ENCODE measurements at regions of chr20 and their contacts with region 1.

Region 1: DNA sequence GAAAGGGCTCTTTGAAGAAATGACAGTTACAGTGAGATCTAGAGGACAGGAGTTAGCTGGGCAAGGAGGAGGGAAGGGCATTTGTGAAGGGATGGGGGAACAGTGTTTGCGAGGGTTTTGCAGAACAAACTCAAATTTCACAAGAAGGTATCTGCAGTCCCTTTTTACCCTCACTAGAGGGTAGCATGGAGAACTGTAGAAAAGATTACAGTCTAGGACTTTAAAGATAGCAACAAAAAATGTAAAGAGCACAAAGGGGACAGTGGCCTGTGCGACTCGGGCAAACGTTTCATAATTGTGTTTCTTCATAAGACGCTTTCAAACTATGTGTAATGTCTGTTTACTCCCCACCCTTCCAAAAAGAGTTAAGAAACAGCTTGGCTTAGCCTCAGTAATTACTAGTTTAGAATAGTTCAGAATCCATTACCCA is 21.2 kb upstream of the ASXL1 start:
- DNase-seq: peak in 1 of 2 donors; percentile 63
- H3K4me3 ChIP-seq: no peak overlapping the region
- H3K27ac ChIP-seq: no peak overlapping the region
- H3K4me1 ChIP-seq: peaks cover 16 to 54% (median 43%) of the 10 kb centered on the region in 4 donors
- H3K27me3 ChIP-seq: no peaks in the 10 kb centered on the region
- CTCF ChIP-seq: peak in 5 of 7 experiments; percentile 29 to 60 (median 45)
- EP300 ChIP-seq: no peak
- POLR2A ChIP-seq: no peak

Region 2: DNA sequence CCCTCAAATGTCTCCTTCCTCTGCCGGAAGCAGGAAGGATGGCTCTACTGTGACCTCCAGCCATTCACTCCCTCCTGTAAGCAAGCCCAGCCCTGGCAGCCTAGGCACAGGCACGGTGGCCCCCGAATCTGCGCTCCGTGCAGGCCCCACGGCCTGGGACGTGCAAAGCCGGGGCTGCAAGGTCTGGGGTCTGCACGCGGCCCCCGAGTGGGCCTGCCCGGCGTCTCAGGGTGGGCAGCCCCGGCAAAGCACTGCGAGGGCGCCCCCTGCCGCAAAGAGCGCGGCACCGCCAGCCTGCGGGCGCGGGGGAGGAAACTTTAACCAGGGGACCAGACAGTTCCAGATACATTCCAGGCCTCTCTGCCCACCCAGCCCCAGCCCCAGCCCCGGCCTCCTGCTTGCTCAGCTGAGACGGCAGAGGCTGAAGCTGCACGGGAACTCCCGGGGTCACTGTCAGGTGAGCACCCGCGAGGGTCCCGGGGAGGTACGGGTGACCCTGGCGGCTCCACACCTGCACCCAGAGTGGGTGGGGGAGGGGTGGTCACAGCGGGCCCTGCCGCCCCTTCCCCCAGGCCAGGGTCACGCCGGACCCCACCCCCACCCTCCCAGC is 120.0 kb after region 1 on chr20:
- intact Hi-C with region 1: no loop called
- DNase-seq: peak; percentile 49 to 81
- H3K4me3 ChIP-seq: peak overlapping the region; percentile 47 to 56 (median 50)
- H3K27ac ChIP-seq: peak overlapping the region in 4 of 5 donors; percentile 6 to 57 (median 28)
- H3K4me1 ChIP-seq: peaks cover 23 to 44% (median 30%) of the 10 kb centered on the region in 4 donors
- H3K27me3 ChIP-seq: no peaks in the 10 kb centered on the region
- CTCF ChIP-seq: peak in 5 of 7 experiments; percentile 57 to 75 (median 74)
- EP300 ChIP-seq: no peak
- POLR2A ChIP-seq: no peak

Region 3: DNA sequence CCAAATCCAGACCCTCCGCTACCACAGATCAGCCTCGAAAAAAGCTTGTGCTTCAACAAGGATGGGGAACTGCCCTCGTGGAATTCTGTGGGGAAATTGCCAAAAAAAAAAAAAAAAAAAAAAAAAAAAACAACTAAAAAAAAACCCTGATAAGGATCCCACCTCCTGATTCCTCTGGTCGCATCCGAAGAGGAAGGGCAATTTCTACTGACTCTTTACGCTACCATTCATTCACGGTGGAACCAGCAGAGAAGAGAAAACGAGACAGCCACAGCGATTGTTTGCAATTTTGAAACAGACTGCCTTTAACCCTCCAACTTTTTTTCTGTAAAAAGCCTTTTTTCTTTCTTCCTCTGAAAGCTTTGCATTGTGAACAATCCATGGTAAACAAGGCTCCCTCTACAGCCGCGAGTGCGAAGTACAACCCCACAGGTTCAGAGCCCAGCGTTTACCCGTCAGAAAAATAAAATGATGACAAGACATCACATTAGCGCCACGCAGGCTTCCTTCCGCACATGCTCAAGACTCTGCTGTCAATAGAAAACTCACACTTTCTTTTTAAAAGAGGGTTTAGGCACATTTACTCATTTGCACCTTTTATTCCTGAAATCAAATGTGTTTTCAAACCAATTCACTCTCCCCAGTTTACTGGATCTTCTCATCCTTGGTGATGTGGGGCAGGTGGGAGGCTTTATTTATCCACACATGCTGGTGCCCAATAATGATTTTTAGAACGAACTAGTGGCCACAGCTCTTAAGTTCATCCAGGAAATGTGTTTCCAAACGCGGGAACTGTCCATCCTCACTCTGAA is 148.2 kb after region 1 on chr20:
- intact Hi-C with region 1: loop called (anchors 10 kb)
- DNase-seq: peak; percentile 76 to 93
- H3K4me3 ChIP-seq: peak overlapping the region; percentile 70 to 92 (median 89)
- H3K27ac ChIP-seq: peak overlapping the region; percentile 5 to 93 (median 88)
- H3K4me1 ChIP-seq: peaks cover 24 to 50% (median 48%) of the 10 kb centered on the region in 4 donors
- H3K27me3 ChIP-seq: no peaks in the 10 kb centered on the region
- CTCF ChIP-seq: peak in 5 of 7 experiments; percentile 64 to 87 (median 81)
- EP300 ChIP-seq: no peak
- POLR2A ChIP-seq: no peak